ENCODE measurements at regions of chr15 and their contacts with region 1.

Region 1: GRCh38 chr15:90954712-90955671 is at the start of gene RCCD1:
- DNase-seq: peak; percentile 91
- H3K4me3 Mint-ChIP-seq: peak within 1 kb of the TSS; percentile 85
- H3K27ac Mint-ChIP-seq: peak within 1 kb of the TSS; percentile 93
- H3K4me1 Mint-ChIP-seq: peaks cover 15% of the 10 kb centered on the region
- H3K27me3 Mint-ChIP-seq: no peaks in the 10 kb centered on the region
- total RNA-seq, gene RCCD1: 30.1 and 31.0 TPM in 2 replicates

Region 2: GRCh38 chr15:90571063-90571541 is 383.9 kb before region 1 on chr15:
- intact Hi-C with region 1: no loop called
- DNase-seq: no peak
- H3K4me3 Mint-ChIP-seq: peak overlapping the region; percentile 67
- H3K27ac Mint-ChIP-seq: peak overlapping the region; percentile 73
- H3K4me1 Mint-ChIP-seq: peaks cover 67% of the 10 kb centered on the region
- H3K27me3 Mint-ChIP-seq: no peaks in the 10 kb centered on the region

Region 3: DNA sequence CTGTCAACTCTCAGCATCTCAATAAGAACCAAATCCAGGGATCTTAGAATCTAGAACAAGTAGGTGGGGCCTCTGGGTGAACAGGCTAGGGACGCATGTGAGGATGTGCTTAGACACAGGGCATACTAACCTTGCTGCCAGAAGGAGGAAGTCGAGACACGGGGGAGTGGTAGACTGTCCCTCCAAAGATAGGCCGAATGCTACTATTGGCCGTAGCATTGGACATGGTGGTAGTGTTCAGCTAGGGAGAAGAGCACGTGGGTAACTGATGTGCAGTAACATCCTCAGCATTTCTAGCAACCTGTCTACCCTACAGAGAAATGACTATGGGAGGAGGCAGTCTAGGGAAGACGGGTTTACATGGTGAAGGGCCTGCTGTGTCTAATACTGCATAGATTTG is 15.3 kb after region 1 on chr15:
- intact Hi-C with region 1: no loop called
- DNase-seq: no peak
- H3K4me3 Mint-ChIP-seq: no peak overlapping the region
- H3K27ac Mint-ChIP-seq: peak overlapping the region; percentile 30
- H3K4me1 Mint-ChIP-seq: no peaks in the 10 kb centered on the region
- H3K27me3 Mint-ChIP-seq: no peaks in the 10 kb centered on the region

Region 4: DNA sequence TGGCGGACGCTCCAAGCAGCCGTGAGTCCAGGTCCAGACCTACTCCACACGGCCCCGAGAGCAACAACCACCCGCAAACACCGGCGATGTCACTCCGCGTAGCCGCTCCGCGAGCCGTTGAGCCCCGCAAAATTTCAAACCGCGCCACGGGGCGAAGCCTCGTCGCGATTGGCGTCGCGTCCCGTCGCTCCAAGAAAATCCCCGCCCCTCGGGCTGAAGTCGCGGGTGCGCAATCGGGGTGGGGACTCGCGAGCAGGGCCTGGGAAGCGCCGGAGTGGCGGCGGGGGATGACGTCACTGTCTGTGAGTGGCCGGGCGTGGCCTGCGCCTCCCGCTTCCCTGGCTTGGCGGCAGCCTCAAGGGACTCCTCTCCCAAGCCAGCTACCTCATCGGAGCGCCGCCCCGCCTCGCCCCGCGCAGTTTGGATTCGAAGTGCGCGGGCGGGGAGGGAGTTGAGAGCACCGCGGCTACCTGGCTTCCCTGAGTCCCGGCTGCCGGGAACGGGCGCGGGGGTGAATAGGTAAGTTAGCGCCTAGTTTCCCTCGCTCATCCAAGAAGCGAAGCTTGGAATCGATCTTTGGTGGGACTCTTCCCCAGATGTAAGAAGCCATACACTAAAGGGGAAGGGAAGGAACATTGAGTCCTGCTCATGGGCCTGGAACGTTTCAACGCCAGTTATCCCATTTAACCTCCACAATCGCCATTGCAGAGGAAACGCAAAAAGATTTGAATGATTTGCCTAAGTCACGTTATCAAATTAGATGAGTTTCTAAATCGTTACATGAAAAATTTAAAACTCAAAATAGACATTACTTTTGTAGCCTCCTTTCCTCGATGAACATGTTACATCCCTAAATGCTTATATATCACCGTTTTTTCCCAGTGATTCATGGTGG is 39.7 kb after region 1 on chr15 and contains the start of gene PRC1:
- intact Hi-C with region 1: loop called (anchors 5 kb)
- DNase-seq: peak; percentile 98
- H3K4me3 Mint-ChIP-seq: peak within 1 kb of the TSS; percentile 100
- H3K27ac Mint-ChIP-seq: peak within 1 kb of the TSS; percentile 100
- H3K4me1 Mint-ChIP-seq: peaks cover 25% of the 10 kb centered on the region
- H3K27me3 Mint-ChIP-seq: no peaks in the 10 kb centered on the region
- total RNA-seq, gene PRC1: 91.8 and 95.2 TPM in 2 replicates

Region 5: GRCh38 chr15:91007266-91007665 is 52.3 kb after region 1 on chr15:
- intact Hi-C with region 1: no loop called
- DNase-seq: no peak
- H3K4me3 Mint-ChIP-seq: no peak overlapping the region
- H3K27ac Mint-ChIP-seq: no peak overlapping the region
- H3K4me1 Mint-ChIP-seq: no peaks in the 10 kb centered on the region
- H3K27me3 Mint-ChIP-seq: no peaks in the 10 kb centered on the region

Region 6: GRCh38 chr15:91032919-91033803 is 78.2 kb after region 1 on chr15:
- intact Hi-C with region 1: loop called (anchors 5 kb)
- DNase-seq: peak; percentile 53
- H3K4me3 Mint-ChIP-seq: no peak overlapping the region
- H3K27ac Mint-ChIP-seq: no peak overlapping the region
- H3K4me1 Mint-ChIP-seq: no peaks in the 10 kb centered on the region
- H3K27me3 Mint-ChIP-seq: peaks cover 10% of the 10 kb centered on the region

Region 7: GRCh38 chr15:91049378-91050127 is 94.6 kb after region 1 on chr15:
- intact Hi-C with region 1: loop called (anchors 1 kb)
- DNase-seq: peak; percentile 61
- H3K4me3 Mint-ChIP-seq: no peak overlapping the region
- H3K27ac Mint-ChIP-seq: no peak overlapping the region
- H3K4me1 Mint-ChIP-seq: peaks cover 20% of the 10 kb centered on the region
- H3K27me3 Mint-ChIP-seq: peaks cover 30% of the 10 kb centered on the region

Region 8: GRCh38 chr15:91135201-91136130 is 180.5 kb after region 1 on chr15:
- intact Hi-C with region 1: no loop called
- DNase-seq: no peak
- H3K4me3 Mint-ChIP-seq: no peak overlapping the region
- H3K27ac Mint-ChIP-seq: no peak overlapping the region
- H3K4me1 Mint-ChIP-seq: no peaks in the 10 kb centered on the region
- H3K27me3 Mint-ChIP-seq: peaks cover 11% of the 10 kb centered on the region

Measured in activated T-helper 2 cell treated with anti-CD3 and anti-CD28 coated beads, Interferon-gamma antibody, Interleukin-2, Interleukin-4, amounts not matched to agents 10 μg/mL and 5 μg/mL and 100 μg/mL, durations not matched to agents 14 hours and 24 hours and 36 hours (primary cell).